Caki2 (cell line): ENCODE measurements at regions of chr17 and their contacts with region 1.

Region 1: DNA sequence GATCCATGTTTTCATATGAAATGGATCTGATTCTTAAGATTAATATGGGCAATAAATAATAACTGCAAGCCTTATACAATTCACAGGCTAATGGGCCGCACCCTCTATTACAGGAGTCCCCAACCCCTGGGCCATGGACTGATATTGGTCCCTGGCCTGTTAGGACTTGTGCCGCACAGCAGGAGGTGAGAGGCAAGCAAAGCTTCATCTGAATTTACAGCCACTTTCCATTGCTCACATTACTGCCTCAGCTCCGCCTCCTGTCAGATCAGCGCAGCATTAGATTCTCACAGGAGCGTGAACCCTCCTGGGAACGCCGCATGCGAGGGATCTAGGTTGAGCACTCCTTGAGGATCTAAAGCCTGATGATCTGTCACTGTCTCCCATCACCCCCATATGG is 26.8 kb downstream of the METTL16 start:
- DNase-seq: no peak

Region 2: DNA sequence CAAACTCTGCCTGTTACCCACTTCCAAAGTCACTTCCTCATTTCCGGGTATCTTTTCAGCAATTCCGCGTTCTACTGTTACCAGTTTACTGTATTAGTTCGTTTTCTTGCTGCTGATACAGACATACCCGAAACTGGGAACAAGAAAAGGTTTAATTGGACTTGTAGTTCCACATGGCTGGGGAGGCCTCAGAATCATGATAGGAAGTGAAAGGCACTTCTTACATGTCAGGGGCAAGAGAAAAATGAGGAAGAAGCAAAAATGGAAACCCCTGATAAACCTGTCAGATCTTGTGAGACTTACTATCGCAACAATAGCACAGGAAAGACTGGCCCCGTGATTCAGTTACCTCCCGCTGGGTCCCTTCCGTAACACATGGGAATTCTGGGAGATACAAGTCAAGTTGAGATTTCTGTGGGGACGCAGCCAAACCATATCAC is 139.4 kb after region 1 on chr17:
- in situ Hi-C with region 1: loop called (anchors 25 kb)
- DNase-seq: no peak

Region 3: DNA sequence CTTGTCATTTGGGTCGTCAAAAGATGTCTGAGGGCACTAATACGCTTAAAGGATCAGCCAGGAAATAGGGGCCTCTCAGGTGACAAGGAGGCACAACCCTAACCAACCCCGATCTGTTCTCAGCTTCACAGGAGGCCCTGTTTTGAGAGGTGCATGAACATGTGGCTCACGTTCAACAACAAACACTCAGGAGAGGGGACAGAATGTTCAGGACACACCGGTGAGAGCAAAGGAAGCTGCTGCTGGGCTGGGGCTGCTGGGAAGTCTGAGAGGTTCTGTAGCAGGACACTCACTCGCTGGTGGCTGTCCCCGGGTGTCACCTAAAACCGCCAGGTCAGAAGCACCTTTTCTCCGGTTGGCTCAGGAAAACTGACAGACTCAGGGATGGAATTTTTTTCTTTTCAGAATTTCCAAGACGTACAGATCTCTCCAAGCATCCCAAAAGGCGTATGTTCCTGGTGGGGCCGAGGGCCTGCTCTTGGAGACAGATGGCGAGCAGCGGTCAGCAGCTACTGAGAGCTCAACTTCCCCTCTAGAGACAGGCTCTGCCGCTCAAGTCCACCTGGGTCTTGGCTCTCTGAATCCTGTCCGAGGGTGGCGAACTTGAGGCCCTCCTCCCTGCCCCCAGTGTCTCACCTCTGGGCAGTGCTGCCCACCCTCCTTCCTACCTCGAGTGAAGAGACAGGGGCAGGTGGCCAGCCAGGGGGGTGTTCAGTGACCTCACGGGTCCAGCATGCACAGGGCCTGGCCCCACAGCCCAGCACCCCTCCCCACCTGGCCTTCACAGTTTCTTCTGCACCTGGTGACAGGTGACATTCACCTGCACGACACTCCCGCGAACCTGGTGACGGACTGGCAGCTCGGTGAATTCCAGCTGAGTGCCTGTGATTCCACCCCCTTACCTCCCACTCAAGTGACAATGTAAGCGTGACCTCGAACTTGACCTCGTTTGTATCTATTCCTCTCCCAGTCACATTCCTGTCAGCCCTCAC is 203.8 kb after region 1 on chr17:
- in situ Hi-C with region 1: loop called (anchors 10 kb)
- DNase-seq: no peak